ENCODE measurements at regions of chr14 and their contacts with region 1.

Region 1: GRCh38 chr14:37709419-37710195 is 114.2 kb downstream of the TTC6 start:
- DNase-seq: no peak
- H3K4me3 ChIP-seq: no peak overlapping the region
- H3K27ac ChIP-seq: no peak overlapping the region
- H3K4me1 ChIP-seq: no peaks in the 10 kb centered on the region
- H3K27me3 ChIP-seq: peaks cover 11% of the 10 kb centered on the region
- CTCF ChIP-seq: peak; percentile 44 to 59

Region 2: DNA sequence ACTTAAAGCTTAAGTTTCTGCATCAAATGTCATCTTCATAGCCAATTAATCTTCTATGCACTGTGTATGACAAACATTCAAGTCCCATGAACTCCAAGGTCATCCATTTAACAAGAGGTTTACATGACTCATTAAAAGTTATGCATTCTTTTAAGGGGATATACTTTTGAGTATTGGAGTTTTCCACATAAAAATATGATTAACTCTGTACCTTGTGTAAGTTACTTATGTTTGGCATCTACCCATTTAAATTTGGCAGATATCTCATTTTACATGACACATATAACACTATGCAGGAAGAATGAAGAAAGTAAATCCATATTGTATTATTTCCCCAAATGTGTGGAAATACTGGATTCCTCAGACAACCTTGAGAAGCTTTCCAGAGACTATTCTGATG is 807.7 kb before region 1 on chr14:
- CTCF ChIA-PET with region 1: interaction called, 37 read pairs
- dilution Hi-C with region 1: no loop called
- in situ Hi-C with region 1: no loop called
- intact Hi-C with region 1: no loop called
- DNase-seq: no peak
- H3K4me3 ChIP-seq: no peak overlapping the region
- H3K27ac ChIP-seq: no peak overlapping the region
- H3K4me1 ChIP-seq: no peaks in the 10 kb centered on the region
- H3K27me3 ChIP-seq: no peaks in the 10 kb centered on the region
- CTCF ChIP-seq: no peak

Region 3: GRCh38 chr14:37230551-37231194 is 478.9 kb before region 1 on chr14:
- CTCF ChIA-PET with region 1: no interaction called
- dilution Hi-C with region 1: no loop called
- in situ Hi-C with region 1: loop called in 1 of 2 experiments (anchors 25 kb)
- intact Hi-C with region 1: no loop called
- DNase-seq: peak; percentile 31
- H3K4me3 ChIP-seq: no peak overlapping the region
- H3K27ac ChIP-seq: no peak overlapping the region
- H3K4me1 ChIP-seq: no peaks in the 10 kb centered on the region
- H3K27me3 ChIP-seq: no peaks in the 10 kb centered on the region
- CTCF ChIP-seq: peak; percentile 70 to 75

Region 4: DNA sequence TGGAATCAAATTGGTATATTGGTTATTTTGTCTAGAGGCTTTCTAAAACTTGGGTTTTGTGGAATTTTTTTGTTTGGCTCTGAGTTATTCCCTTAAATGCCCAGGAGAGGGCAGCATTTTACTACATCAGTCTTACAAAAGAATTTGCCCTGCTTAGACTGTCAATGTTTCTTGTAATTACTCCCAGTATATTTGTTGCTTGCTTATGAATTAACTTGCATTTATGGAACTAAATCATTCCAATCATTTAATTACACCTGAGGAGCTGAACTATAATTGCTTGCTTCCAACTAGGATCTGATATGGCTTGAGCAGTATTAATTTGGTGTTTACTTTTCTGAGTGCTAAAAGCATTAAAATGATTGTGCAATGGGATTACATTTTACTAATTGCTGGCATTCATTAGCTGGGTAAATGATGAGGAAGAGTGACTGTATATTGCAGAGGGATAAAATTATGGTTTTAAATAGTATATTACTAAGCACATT is 463.1 kb before region 1 on chr14:
- CTCF ChIA-PET with region 1: no interaction called
- dilution Hi-C with region 1: no loop called
- in situ Hi-C with region 1: loop called in 1 of 2 experiments (anchors 25 kb)
- intact Hi-C with region 1: loop called (anchors 5 kb)
- DNase-seq: peak; percentile 21
- H3K4me3 ChIP-seq: no peak overlapping the region
- H3K27ac ChIP-seq: no peak overlapping the region
- H3K4me1 ChIP-seq: no peaks in the 10 kb centered on the region
- H3K27me3 ChIP-seq: no peaks in the 10 kb centered on the region
- CTCF ChIP-seq: peak; percentile 62 to 65

Region 5: DNA sequence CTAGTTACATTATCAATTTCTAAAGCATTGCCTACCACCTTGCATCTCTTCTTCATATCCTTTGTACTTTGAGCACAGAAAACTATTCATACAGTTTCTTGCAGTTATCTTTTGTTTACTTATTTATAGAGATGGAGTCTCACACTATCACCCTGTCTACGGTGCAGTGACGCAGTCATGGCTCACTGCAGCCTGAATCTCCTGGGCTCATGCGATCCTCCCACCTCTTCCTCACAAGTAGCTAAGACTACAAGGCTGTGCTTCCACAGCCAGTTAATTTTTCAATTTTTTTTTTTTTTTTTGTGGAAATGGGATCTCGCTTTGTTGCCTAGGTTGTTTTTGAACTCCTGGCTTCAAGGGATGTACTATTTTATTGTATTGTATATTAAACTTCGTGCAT is 43.9 kb after region 1 on chr14:
- CTCF ChIA-PET with region 1: no interaction called
- dilution Hi-C with region 1: no loop called
- in situ Hi-C with region 1: no loop called
- intact Hi-C with region 1: no loop called
- DNase-seq: no peak
- H3K4me3 ChIP-seq: no peak overlapping the region
- H3K27ac ChIP-seq: no peak overlapping the region
- H3K4me1 ChIP-seq: no peaks in the 10 kb centered on the region
- H3K27me3 ChIP-seq: peaks cover 2% of the 10 kb centered on the region
- CTCF ChIP-seq: no peak

Region 6: GRCh38 chr14:37796703-37797416 is 87.3 kb after region 1 on chr14:
- CTCF ChIA-PET with region 1: no interaction called
- dilution Hi-C with region 1: loop called (anchors 5 kb)
- in situ Hi-C with region 1: no loop called
- intact Hi-C with region 1: no loop called
- DNase-seq: no peak
- H3K4me3 ChIP-seq: no peak overlapping the region
- H3K27ac ChIP-seq: no peak overlapping the region
- H3K4me1 ChIP-seq: no peaks in the 10 kb centered on the region
- H3K27me3 ChIP-seq: no peaks in the 10 kb centered on the region
- CTCF ChIP-seq: no peak

Region 7: GRCh38 chr14:37874429-37875191 is 165.0 kb after region 1 on chr14:
- CTCF ChIA-PET with region 1: interaction called, 3 read pairs
- dilution Hi-C with region 1: no loop called
- in situ Hi-C with region 1: loop called (anchors 5 to 10 kb)
- intact Hi-C with region 1: loop called (anchors 1 kb)
- DNase-seq: peak; percentile 66
- H3K4me3 ChIP-seq: no peak overlapping the region
- H3K27ac ChIP-seq: peak overlapping the region; percentile 14
- H3K4me1 ChIP-seq: peaks cover 4% of the 10 kb centered on the region
- H3K27me3 ChIP-seq: no peaks in the 10 kb centered on the region
- CTCF ChIP-seq: peak; percentile 86 to 89

Region 8: GRCh38 chr14:38867561-38868150 is 1158.0 kb after region 1 on chr14:
- CTCF ChIA-PET with region 1: no interaction called
- dilution Hi-C with region 1: no loop called
- in situ Hi-C with region 1: no loop called
- intact Hi-C with region 1: loop called (anchors 5 kb)
- DNase-seq: peak; percentile 42
- H3K4me3 ChIP-seq: no peak overlapping the region
- H3K27ac ChIP-seq: no peak overlapping the region
- H3K4me1 ChIP-seq: no peaks in the 10 kb centered on the region
- H3K27me3 ChIP-seq: no peaks in the 10 kb centered on the region
- CTCF ChIP-seq: peak; percentile 86 to 88

Measured in mammary epithelial cell (primary cell).